Panc1 (cell line): ENCODE measurements at regions of chr13 and their contacts with region 1.

Region 1: DNA sequence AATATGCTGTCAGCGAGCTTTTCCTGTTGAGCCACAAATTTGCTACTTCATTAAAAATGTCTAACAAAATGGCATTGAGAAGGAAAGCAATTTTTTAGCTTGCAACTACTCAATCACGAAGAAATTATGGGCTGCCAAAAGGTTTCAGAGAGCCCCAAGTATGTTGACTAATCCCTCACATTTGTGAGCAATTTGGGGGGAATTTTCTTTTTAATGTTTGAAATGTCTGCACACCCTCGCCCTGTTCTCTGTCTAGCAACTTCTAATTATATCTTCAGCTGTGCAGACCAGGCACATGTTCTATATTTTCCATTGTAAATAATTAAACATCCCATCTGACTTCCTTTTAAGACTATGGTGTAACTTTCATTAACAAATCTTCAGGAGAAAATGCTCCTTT is 192.9 kb downstream of the DCT start:
- DNase-seq: no peak
- ATAC-seq: no peak
- H3K4me3 ChIP-seq: no peak overlapping the region
- H3K27ac ChIP-seq: no peak overlapping the region
- H3K4me1 ChIP-seq: no peaks in the 10 kb centered on the region
- H3K27me3 ChIP-seq: no peaks in the 10 kb centered on the region
- CTCF ChIP-seq: no peak

Region 2: GRCh38 chr13:95349267-95349666 is 1062.7 kb after region 1 on chr13:
- CTCF ChIA-PET with region 1: no interaction called
- POLR2A ChIA-PET with region 1: interaction called, 12 read pairs
- in situ Hi-C with region 1: no loop called
- intact Hi-C with region 1: no loop called
- DNase-seq: no peak
- ATAC-seq: no peak
- H3K4me3 ChIP-seq: no peak overlapping the region
- H3K27ac ChIP-seq: no peak overlapping the region
- H3K4me1 ChIP-seq: no peaks in the 10 kb centered on the region
- H3K27me3 ChIP-seq: no peaks in the 10 kb centered on the region
- CTCF ChIP-seq: no peak